Psoas muscle (tissue), 8 donors: ENCODE measurements at regions of chr9 and their contacts with region 1.

Region 1: GRCh38 chr9:100352727-100353505 is at the start of gene TEX10:
- DNase-seq: peak; percentile 88 to 94
- ATAC-seq: peak; percentile 97 to 99 (median 98)
- H3K4me3 ChIP-seq: peak within 1 kb of the TSS; percentile 91
- H3K27ac ChIP-seq: peak within 1 kb of the TSS; percentile 87
- H3K4me1 ChIP-seq: peaks cover 28% of the 10 kb centered on the region
- H3K27me3 ChIP-seq: no peaks in the 10 kb centered on the region
- CTCF ChIP-seq: no peak
- total RNA-seq, gene TEX10: 12.7 to 23.1 (median 14.7) TPM

Region 2: DNA sequence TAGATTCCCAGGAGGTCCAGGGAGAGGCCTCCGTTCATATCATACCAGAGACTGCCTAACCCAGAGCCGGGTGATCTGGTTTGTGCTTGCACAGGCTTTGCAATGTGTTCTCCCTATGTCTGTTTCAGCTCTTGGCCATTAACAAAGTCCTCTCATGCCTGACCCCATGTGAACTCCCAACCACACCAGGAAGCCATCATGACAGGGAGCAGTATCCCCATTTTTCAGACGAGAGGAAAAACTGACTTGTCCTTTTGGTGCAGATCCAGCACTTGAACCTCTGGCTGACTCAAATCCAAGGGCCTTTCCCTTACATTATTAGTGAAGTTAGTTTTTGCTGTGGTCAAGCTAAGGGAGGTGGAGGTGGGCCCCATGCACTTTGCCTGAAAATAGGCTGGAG is 58.6 kb before region 1 on chr9:
- intact Hi-C with region 1: no loop called
- DNase-seq: no peak
- ATAC-seq: no peak
- H3K4me3 ChIP-seq: no peak overlapping the region
- H3K27ac ChIP-seq: no peak overlapping the region
- H3K4me1 ChIP-seq: no peaks in the 10 kb centered on the region
- H3K27me3 ChIP-seq: no peaks in the 10 kb centered on the region
- CTCF ChIP-seq: no peak

Region 3: GRCh38 chr9:100411472-100412283 is 58.8 kb after region 1 on chr9:
- intact Hi-C with region 1: loop called in 1 of 2 experiments (anchors 5 kb)
- DNase-seq: peak; percentile 90 to 92
- ATAC-seq: peak; percentile 97 to 100 (median 100)
- H3K4me3 ChIP-seq: peak overlapping the region; percentile 75
- H3K27ac ChIP-seq: peak overlapping the region; percentile 36
- H3K4me1 ChIP-seq: no peaks in the 10 kb centered on the region
- H3K27me3 ChIP-seq: peaks cover 0 to 5% (median 0%) of the 10 kb centered on the region in 3 donors
- CTCF ChIP-seq: no peak

Region 4: DNA sequence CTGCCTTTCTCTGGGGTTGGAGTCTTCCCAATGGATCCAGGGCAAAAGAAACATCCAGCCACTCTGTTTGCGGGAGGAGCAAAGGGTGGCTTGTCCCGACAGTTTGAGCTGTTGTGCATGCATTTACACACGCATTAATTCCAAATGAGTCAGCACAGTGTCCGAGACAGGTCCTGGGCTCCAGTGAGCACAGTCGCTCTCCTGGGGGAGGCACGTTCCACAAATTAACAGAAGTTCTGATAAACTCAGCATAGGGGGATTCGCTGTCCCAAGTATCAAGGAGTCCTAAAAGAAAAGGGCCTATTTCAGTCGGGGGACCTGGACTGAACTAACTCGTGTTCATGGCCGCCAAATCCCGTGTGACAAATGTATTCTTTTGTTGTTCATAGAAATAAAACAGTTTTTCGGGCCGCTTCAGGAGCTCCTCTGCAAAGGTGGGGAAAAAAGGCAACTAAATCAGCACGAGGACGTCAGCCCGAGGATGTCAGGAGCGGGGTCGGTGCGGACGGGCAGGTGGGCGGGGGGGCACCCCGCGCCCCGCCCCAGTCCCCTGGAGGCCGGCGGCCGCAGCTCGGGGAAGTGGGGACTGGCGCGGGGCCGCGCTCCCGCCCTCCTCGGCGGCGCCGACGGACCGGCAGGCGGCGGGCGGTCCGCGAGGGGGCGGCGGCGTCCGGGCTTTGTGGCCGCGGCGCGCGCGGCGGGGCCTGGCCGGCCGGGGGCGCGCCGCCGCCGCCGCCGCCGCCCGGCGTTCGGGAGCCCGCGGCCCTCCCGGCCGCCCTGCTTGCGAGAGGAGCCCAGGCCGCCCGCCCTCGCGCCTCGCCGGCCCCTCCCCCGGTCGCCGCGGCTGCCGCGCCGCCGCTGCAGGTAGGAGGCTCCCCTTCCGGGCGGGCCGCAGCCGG is 73.9 kb after region 1 on chr9 and contains the start of gene MSANTD3:
- intact Hi-C with region 1: loop called in 1 of 2 experiments (anchors 5 kb)
- DNase-seq: peak; percentile 69 to 81
- ATAC-seq: peak; percentile 77 to 90 (median 84)
- H3K4me3 ChIP-seq: peak within 1 kb of the TSS; percentile 92
- H3K27ac ChIP-seq: peak within 1 kb of the TSS; percentile 91
- H3K4me1 ChIP-seq: peaks cover 35% of the 10 kb centered on the region
- H3K27me3 ChIP-seq: no peaks in the 10 kb centered on the region
- CTCF ChIP-seq: peak; percentile 32
- total RNA-seq, gene MSANTD3: 15.2 to 59.4 (median 32.6) TPM

Region 5: GRCh38 chr9:100662122-100662521 is 309.2 kb after region 1 on chr9:
- intact Hi-C with region 1: no loop called
- DNase-seq: no peak
- ATAC-seq: no peak
- H3K4me3 ChIP-seq: no peak overlapping the region
- H3K27ac ChIP-seq: no peak overlapping the region
- H3K4me1 ChIP-seq: no peaks in the 10 kb centered on the region
- H3K27me3 ChIP-seq: no peaks in the 10 kb centered on the region
- CTCF ChIP-seq: no peak

Region 6: DNA sequence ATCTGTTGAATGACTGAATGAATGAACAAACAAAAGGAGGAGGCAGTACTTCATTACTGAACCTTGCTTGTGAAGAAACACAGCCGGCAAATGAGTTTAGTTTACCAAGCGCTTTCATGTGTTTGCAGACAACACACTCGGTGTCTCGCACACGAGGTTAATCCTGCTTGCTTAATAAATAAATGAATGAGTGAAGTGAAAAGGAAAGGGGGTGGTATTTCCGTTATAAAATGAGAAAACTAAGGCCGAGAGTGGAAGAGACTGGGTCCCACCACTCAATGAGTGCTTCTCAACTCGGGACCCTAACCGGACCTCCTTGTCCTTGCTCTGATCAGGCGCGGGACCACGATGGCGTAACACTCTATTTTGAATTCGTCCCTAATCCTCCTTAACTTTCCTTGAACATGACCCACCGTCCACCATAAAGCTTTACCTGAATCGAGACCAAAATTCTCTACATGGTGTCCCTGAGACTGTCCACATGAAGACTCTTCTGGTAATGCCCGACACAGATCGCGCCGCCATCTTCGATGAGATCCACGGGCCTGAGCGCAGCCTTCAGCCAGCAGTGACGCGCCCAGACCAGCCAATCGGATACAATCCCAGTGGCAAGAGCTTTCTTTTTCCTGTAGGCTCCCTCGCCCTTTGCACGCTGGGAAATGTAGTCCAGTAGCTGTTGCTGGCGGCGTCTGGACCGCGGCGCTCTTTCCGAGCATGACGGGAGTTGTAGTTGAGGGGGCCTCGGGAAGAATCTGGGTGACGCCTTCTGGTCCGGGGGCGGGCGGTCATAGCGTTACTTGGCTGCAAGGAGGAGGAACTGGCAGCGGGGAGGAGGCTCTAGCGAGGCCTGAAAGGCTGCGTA is 1045.4 kb after region 1 on chr9 and contains the starts of genes MRPL50 and ZNF189:
- intact Hi-C with region 1: loop called in 1 of 2 experiments (anchors 5 kb)
- DNase-seq: peak; percentile 97 to 98
- ATAC-seq: peak; percentile 96 to 99 (median 98)
- H3K4me3 ChIP-seq: peak within 1 kb of the TSS; percentile 81
- H3K27ac ChIP-seq: peak within 1 kb of the TSS; percentile 88
- H3K4me1 ChIP-seq: peaks cover 39% of the 10 kb centered on the region
- H3K27me3 ChIP-seq: no peaks in the 10 kb centered on the region
- CTCF ChIP-seq: no peak
- total RNA-seq, gene MRPL50: 11.0 to 15.2 (median 12.0) TPM
- total RNA-seq, gene ZNF189: 7.8 to 31.3 (median 12.2) TPM